ENCODE measurements at regions of chr4 and their contacts with region 1.

Region 1: GRCh38 chr4:99949034-99949998 is 759 bp downstream of the H2AZ1 start:
- DNase-seq: peak; percentile 68 to 96
- H3K4me3 ChIP-seq: peak overlapping the region; percentile 69 to 93
- H3K27ac ChIP-seq: peak overlapping the region; percentile 97 to 99
- H3K4me1 ChIP-seq: peaks cover 0 to 12% of the 10 kb centered on the region in 2 donors
- H3K27me3 ChIP-seq: no peaks in the 10 kb centered on the region
- CTCF ChIP-seq: peak; percentile 61 to 89 (median 83)

Region 2: GRCh38 chr4:99610605-99611175 is 338.6 kb before region 1 on chr4:
- intact Hi-C with region 1: loop called (anchors 5 kb)
- DNase-seq: peak in 1 of 2 donors; percentile 72
- H3K4me3 ChIP-seq: peak overlapping the region in 1 of 2 donors; percentile 41
- H3K27ac ChIP-seq: peak overlapping the region; percentile 21 to 56
- H3K4me1 ChIP-seq: peaks cover 0 to 11% of the 10 kb centered on the region in 2 donors
- H3K27me3 ChIP-seq: no peaks in the 10 kb centered on the region
- CTCF ChIP-seq: no peak

Region 3: DNA sequence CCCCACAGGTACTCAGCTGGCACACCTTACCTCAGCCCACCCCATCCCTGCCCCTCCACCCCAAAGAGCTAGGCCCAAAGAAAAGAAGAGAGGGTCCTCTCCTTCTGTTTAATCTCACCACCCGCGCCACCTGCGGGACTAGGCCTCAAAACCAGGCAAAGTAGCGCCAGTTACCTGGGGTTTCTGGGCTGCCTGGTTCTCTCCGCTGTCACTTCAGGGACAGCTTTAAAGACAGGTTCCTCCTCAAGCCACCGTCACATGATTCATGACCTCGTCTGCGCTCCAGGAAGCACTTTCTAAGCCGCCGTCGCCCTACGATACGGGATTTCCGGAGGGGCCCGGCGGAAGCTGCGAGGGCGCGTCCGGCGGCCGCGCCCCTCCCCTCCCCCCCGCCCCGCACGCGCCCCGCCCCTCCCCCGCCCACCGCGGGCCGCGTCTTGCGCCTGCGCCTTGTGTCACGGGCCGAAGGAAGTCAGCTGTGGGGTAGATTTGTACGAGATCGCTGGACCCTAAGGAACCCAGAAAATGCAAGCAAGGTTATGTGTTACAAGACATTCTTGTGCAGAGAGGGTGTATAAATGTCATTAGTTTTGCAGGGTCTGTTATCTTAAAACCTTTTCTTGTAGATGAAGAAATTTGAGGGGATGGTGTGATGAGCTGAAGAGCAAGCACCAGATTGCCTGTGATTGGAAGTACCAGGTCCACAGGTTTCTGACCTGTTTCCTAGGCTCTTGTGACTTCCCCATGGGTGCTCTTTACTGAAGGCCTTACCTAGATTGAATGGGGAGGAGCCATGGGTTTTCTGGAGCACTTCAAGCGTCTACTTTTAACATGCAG is 54.9 kb before region 1 on chr4 and contains the start of gene LAMTOR3:
- intact Hi-C with region 1: loop called (anchors 1 kb)
- DNase-seq: peak; percentile 60 to 95
- H3K4me3 ChIP-seq: peak within 1 kb of the TSS; percentile 65 to 99
- H3K27ac ChIP-seq: peak within 1 kb of the TSS; percentile 88 to 94
- H3K4me1 ChIP-seq: peaks cover 0 to 15% of the 10 kb centered on the region in 2 donors
- H3K27me3 ChIP-seq: no peaks in the 10 kb centered on the region
- CTCF ChIP-seq: no peak
- total RNA-seq, gene LAMTOR3: 9.6 TPM